ENCODE measurements at regions of chr15 and their contacts with region 1.

Region 1: GRCh38 chr15:74540761-74541493 is at the start of gene ARID3B:
- DNase-seq: peak; percentile 96
- ATAC-seq: peak; percentile 92
- H3K4me3 ChIP-seq: peak within 1 kb of the TSS; percentile 98
- H3K27ac ChIP-seq: peak within 1 kb of the TSS; percentile 80
- H3K4me1 ChIP-seq: peaks cover 45% of the 10 kb centered on the region
- H3K27me3 ChIP-seq: no peaks in the 10 kb centered on the region
- CTCF ChIP-seq: no peak
- total RNA-seq, gene ARID3B: 17.4 and 19.0 TPM in 2 replicates

Region 2: GRCh38 chr15:74265046-74265639 is 275.8 kb before region 1 on chr15:
- CTCF ChIA-PET with region 1: no interaction called
- POLR2A ChIA-PET with region 1: no interaction called
- intact Hi-C with region 1: no loop called
- DNase-seq: peak; percentile 26
- ATAC-seq: no peak
- H3K4me3 ChIP-seq: no peak overlapping the region
- H3K27ac ChIP-seq: no peak overlapping the region
- H3K4me1 ChIP-seq: no peaks in the 10 kb centered on the region
- H3K27me3 ChIP-seq: peaks cover 22% of the 10 kb centered on the region
- CTCF ChIP-seq: no peak

Region 3: DNA sequence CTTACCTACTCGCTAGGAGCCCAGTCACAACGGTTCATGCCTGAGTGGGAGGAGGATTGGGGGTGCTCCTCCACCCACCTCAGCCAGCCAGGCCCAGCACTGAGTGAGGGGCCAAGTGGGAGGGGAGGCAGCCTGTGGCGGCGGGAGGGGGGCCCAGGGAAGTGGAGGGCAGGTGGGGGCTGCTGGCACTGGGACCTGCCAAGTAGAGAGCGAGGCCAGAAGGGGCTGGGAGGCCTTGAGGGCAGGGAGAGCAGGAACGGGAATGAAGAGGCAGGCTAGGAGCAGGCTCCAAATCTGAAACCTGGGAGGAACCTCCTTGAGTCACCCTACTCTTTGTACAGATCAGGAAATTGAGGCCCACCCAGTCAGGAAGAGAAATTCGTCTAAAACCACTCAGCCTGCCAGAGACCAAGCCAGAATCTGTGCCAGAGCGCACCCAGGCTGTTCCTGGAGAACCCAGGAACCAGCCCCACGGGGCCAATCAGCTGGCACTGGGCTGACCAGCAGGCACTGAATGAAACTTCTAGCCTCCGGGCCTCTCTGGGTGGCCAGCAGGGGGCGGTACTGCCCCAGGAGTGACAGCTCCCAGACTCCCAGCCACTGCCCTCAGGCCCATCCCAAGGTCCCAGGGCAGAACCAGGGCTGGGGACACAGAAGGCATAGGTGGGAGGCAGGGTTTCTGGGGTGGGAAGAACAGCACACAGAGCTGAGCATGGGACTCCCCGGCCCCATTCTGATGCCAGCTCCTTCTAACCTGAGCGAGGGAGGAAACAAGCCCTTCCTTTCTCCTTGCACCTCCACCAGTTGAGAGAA is 158.7 kb before region 1 on chr15:
- CTCF ChIA-PET with region 1: no interaction called
- POLR2A ChIA-PET with region 1: no interaction called
- intact Hi-C with region 1: loop called (anchors 10 kb)
- DNase-seq: peak; percentile 91
- ATAC-seq: peak; percentile 74
- H3K4me3 ChIP-seq: no peak overlapping the region
- H3K27ac ChIP-seq: peak overlapping the region; percentile 99
- H3K4me1 ChIP-seq: peaks cover 59% of the 10 kb centered on the region
- H3K27me3 ChIP-seq: no peaks in the 10 kb centered on the region
- CTCF ChIP-seq: peak; percentile 95

Region 4: DNA sequence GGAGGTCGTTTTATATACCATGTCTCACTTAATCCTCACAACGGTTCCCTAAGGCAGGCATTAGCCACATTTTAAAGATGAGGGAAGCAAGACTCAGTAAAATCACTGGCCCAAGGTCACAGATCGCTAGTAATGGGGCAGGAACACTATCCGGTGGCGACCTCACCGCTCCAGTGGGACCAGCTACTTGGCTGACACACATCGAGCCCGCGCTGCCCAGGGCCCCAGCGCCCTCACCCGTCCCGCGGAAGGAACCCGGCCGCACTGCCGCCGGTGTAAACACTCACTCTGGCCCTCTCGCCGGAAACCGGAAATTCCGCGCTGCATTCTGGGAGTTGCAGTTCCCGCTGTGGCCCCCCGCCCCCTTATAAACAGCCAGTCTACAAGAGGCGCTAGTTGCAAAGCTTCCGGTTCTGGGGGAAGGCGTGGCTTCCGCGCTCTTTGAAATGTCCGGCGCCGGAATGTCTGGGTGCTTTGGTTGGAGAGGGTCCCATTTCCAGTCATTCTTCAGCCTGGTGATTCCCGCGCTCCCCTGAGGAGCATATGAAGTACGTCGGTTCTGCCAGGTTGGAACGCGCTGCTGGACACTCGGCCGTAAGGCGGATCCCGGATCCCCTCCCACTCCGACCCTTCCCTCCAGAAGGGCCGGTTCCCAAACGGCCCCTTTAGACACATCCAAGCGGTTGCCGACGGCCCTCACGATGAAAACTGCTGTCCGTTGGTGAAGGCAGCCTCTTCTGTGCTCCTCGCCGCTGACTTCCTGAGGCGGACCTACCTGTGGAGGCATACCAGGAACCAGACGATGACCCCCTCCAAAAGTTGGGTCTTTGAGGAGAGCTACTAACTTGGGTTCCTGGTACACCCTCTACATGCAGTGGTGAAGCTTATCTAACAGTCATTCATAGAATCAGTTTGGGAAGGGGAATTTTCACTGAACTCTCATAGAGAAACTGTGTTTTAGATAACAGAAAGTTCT is 79.8 kb before region 1 on chr15 and contains the start of gene UBL7:
- CTCF ChIA-PET with region 1: interaction called, 6 read pairs
- POLR2A ChIA-PET with region 1: no interaction called
- intact Hi-C with region 1: loop called (anchors 5 kb)
- DNase-seq: peak; percentile 97
- ATAC-seq: peak; percentile 95
- H3K4me3 ChIP-seq: peak within 1 kb of the TSS; percentile 85
- H3K27ac ChIP-seq: peak within 1 kb of the TSS; percentile 57
- H3K4me1 ChIP-seq: 0 out of 2 replicates have a peak, but pooled peaks cover 5% of the 10 kb centered on the region
- H3K27me3 ChIP-seq: no peaks in the 10 kb centered on the region
- CTCF ChIP-seq: peak; percentile 42; the same call in 1 of the 2 replicates
- total RNA-seq, gene UBL7: 46.1 and 57.1 TPM in 2 replicates

Region 5: DNA sequence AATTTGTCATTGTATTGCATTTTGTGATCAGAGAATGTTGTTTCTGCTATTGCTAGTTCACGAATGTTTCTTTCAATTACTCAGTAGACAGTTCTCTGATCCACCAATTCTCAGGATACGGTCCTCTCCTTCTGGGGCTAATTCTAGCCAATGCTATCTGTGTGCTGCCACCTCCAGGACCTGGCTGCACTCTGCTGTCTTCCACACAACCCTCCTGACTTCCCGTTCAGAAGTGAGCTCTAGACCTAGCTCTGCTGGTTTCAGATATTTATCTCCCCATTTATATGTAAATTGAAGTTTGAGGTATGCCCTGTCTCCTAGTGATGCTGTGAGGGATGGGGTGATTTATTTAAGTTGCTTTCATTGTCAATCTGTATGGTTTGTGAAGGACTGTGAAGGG is 58.3 kb before region 1 on chr15:
- CTCF ChIA-PET with region 1: no interaction called
- POLR2A ChIA-PET with region 1: no interaction called
- intact Hi-C with region 1: no loop called
- DNase-seq: peak; percentile 7
- ATAC-seq: peak; percentile 58
- H3K4me3 ChIP-seq: no peak overlapping the region
- H3K27ac ChIP-seq: no peak overlapping the region
- H3K4me1 ChIP-seq: no peaks in the 10 kb centered on the region
- H3K27me3 ChIP-seq: no peaks in the 10 kb centered on the region
- CTCF ChIP-seq: peak; percentile 39

Region 6: DNA sequence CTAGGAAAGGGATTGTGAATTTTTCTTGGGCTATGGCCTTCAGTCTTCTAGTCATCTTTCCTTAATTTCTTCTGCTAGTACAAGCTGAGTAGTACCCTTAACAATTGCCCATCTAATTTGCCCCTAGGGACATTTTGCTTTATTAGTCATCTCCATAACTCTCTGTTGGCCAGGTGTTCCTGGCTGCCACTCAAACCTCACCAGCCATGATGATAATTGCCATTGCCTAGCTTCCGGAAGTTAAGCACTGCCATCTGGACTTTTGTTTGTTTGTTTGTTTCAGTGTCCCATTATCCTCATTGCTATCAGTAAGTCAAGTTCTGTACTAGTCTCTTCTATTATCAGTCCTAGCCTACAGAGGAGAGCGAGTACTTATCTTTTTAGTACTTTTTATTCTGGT is 43.3 kb before region 1 on chr15:
- CTCF ChIA-PET with region 1: no interaction called
- POLR2A ChIA-PET with region 1: no interaction called
- intact Hi-C with region 1: loop called (anchors 2 kb)
- DNase-seq: peak; percentile 96
- ATAC-seq: peak; percentile 92
- H3K4me3 ChIP-seq: no peak overlapping the region
- H3K27ac ChIP-seq: peak overlapping the region; percentile 64
- H3K4me1 ChIP-seq: peaks cover 14% of the 10 kb centered on the region
- H3K27me3 ChIP-seq: no peaks in the 10 kb centered on the region
- CTCF ChIP-seq: no peak

Region 7: GRCh38 chr15:74525946-74526345 is 15.0 kb before region 1 on chr15:
- CTCF ChIA-PET with region 1: no interaction called
- POLR2A ChIA-PET with region 1: interaction called, 9 read pairs
- intact Hi-C with region 1: loop called (anchors 2 kb)
- DNase-seq: peak; percentile 96
- ATAC-seq: peak; percentile 73
- H3K4me3 ChIP-seq: no peak overlapping the region
- H3K27ac ChIP-seq: peak overlapping the region; percentile 96
- H3K4me1 ChIP-seq: peaks cover 54% of the 10 kb centered on the region
- H3K27me3 ChIP-seq: no peaks in the 10 kb centered on the region
- CTCF ChIP-seq: no peak

Region 8: GRCh38 chr15:74937596-74938296 is 396.8 kb after region 1 on chr15 and contains the start of gene COX5A:
- CTCF ChIA-PET with region 1: no interaction called
- POLR2A ChIA-PET with region 1: no interaction called
- intact Hi-C with region 1: loop called (anchors 10 kb)
- DNase-seq: peak; percentile 96
- ATAC-seq: peak; percentile 97
- H3K4me3 ChIP-seq: peak within 1 kb of the TSS; percentile 99
- H3K27ac ChIP-seq: peak within 1 kb of the TSS; percentile 52
- H3K4me1 ChIP-seq: peaks cover 8% of the 10 kb centered on the region; the same call in 1 of the 2 replicates
- H3K27me3 ChIP-seq: no peaks in the 10 kb centered on the region
- CTCF ChIP-seq: no peak
- total RNA-seq, gene COX5A: 109 and 145 TPM in 2 replicates

Measured in PC-3 (cell line).